ENCODE measurements at regions of chr6 and their contacts with region 1.

Region 1: GRCh38 chr6:139990856-139991465 is 616.5 kb upstream of the CITED2 start:
- DNase-seq: no peak
- ATAC-seq: peak in 1 of 2 donors; percentile 83
- H3K4me3 ChIP-seq: peak overlapping the region in 1 of 4 donors; percentile 8
- H3K27ac ChIP-seq: peak overlapping the region in 2 of 4 donors; percentile 9 to 11
- H3K4me1 ChIP-seq: peaks cover 7 to 8% of the 10 kb centered on the region in 2 donors
- H3K27me3 ChIP-seq: no peaks in the 10 kb centered on the region
- CTCF ChIP-seq: no peak
- POLR2A ChIP-seq: no peak

Region 2: DNA sequence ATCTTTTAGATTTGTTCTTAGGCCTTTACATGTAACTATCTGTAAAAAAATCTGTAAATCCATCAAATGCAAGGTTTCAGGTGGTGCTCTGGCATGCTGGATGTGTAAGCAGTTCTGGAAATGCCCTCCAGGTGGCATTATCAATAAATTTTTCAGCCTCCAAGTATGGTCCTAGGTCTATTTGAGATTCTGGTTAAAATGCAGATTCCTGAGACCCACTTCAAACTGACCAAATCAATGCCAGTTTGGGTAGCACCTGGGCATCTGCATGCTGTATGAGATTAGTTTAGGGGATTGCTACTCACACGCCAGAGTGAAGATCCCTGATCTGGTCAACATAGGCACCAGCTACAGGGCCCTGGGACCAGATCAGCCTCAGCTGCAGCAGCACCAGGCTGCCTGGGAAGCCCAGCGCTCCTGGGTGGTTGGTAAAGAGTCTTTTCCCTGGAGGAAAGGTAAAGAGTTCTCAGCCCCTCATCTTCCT is 109.2 kb before region 1 on chr6:
- in situ Hi-C with region 1: no loop called
- intact Hi-C with region 1: loop called (anchors 5 kb)
- DNase-seq: no peak
- ATAC-seq: peak; percentile 33 to 48
- H3K4me3 ChIP-seq: peak overlapping the region in 1 of 4 donors; percentile 3
- H3K27ac ChIP-seq: peak overlapping the region; percentile 59 to 66 (median 65)
- H3K4me1 ChIP-seq: peaks cover 21 to 27% of the 10 kb centered on the region in 2 donors
- H3K27me3 ChIP-seq: no peaks in the 10 kb centered on the region
- CTCF ChIP-seq: peak in 4 of 5 experiments; percentile 42 to 67 (median 57)
- POLR2A ChIP-seq: no peak

Region 3: DNA sequence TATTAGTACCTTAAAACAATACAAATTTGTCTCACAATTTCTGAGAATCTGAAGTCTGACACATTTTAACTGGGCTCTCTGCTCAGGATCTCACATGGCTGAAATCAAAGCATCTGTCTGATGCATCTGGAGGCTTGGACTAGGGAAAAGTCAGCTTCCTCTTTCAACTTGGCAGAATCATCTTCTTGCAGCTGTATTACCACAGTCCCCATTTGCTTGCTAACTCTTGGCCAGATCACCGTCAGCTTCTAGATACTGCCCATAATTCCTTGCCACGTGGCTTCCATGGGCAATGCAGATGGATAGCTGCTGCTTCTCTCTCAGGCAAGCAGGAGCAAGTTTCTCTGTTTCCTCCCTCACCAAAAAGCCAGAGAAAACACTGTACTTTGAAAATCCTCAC is 489.9 kb after region 1 on chr6:
- in situ Hi-C with region 1: no loop called
- intact Hi-C with region 1: no loop called
- DNase-seq: peak; percentile 16 to 28
- ATAC-seq: peak; percentile 79 to 88
- H3K4me3 ChIP-seq: no peak overlapping the region
- H3K27ac ChIP-seq: no peak overlapping the region
- H3K4me1 ChIP-seq: no peaks in the 10 kb centered on the region
- H3K27me3 ChIP-seq: no peaks in the 10 kb centered on the region
- CTCF ChIP-seq: no peak
- POLR2A ChIP-seq: no peak

Region 4: GRCh38 chr6:140537819-140538705 is 547.1 kb after region 1 on chr6:
- in situ Hi-C with region 1: no loop called
- intact Hi-C with region 1: no loop called
- DNase-seq: peak in 1 of 2 donors; percentile 20
- ATAC-seq: peak; percentile 74 to 82
- H3K4me3 ChIP-seq: peak overlapping the region in 3 of 4 donors; percentile 3 to 43 (median 9)
- H3K27ac ChIP-seq: peak overlapping the region; percentile 37 to 60 (median 46)
- H3K4me1 ChIP-seq: peaks cover 10 to 16% of the 10 kb centered on the region in 2 donors
- H3K27me3 ChIP-seq: no peaks in the 10 kb centered on the region
- CTCF ChIP-seq: no peak
- POLR2A ChIP-seq: no peak